ENCODE measurements at regions of chr12 and their contacts with region 1.

Region 1: DNA sequence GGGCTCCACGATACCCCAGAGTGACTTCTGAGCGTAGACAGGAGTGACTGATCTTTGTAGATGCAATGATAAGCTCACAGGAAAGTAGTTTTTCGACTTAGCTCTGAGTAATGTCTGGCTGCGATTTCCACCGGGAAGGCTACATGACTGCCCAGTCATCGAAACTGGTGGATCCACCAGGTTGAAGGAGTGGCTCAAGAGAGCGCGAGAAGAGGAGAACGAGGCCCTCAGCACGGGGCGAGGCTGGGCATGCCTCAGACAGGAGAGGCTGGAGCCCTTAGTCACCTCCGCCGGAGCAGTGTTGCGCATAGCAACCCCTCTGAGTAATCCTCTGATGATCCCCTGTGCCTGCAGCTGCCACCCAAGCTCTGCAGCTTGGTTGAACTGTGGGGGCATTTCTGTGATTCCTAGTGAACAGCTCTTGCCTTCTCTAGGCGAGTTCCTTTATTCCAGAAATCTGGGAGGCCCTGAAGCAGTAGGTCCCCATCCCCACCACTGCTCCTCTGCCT is 25.6 kb downstream of the ELK3 start:
- DNase-seq: peak; percentile 96 to 99
- H3K4me3 ChIP-seq: peak overlapping the region; percentile 56
- H3K27ac ChIP-seq: peak overlapping the region; percentile 100
- H3K4me1 ChIP-seq: peaks cover 53% of the 10 kb centered on the region
- H3K27me3 ChIP-seq: no peaks in the 10 kb centered on the region
- CTCF ChIP-seq: no peak

Region 2: DNA sequence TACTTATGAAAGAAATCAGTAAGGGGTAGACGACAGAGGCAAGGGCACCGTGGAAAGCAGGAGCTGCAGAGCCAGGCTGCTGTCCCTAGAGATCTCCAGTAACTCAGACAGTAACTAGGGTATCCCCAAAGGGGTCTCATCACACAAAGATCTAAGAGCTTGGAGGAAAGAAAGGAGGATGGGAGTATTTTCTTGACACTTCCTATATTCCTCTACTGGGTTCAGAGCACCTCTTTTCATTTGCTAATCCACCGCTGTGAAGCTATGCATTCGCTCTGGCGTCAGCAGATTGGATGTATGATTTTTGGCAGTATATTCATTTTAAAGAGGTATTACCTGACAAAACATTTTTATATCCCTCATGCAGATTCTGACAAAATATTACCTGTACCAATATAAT is 681.1 kb before region 1 on chr12:
- CTCF ChIA-PET with region 1: interaction called, 11 read pairs
- POLR2A ChIA-PET with region 1: no interaction called
- intact Hi-C with region 1: no loop called
- DNase-seq: no peak
- H3K4me3 ChIP-seq: no peak overlapping the region
- H3K27ac ChIP-seq: no peak overlapping the region
- H3K4me1 ChIP-seq: no peaks in the 10 kb centered on the region
- H3K27me3 ChIP-seq: no peaks in the 10 kb centered on the region
- CTCF ChIP-seq: no peak

Region 3: GRCh38 chr12:96061864-96062453 is 157.8 kb before region 1 on chr12:
- CTCF ChIA-PET with region 1: interaction called, 11 read pairs
- POLR2A ChIA-PET with region 1: interaction called, 7 read pairs
- intact Hi-C with region 1: loop called (anchors 1 kb)
- DNase-seq: peak; percentile 69 to 72
- H3K4me3 ChIP-seq: no peak overlapping the region
- H3K27ac ChIP-seq: 0 out of 2 replicates have a peak overlapping the region, but pooled peaks have one; percentile 14
- H3K4me1 ChIP-seq: peaks cover 9% of the 10 kb centered on the region; the same call in 1 of the 2 replicates
- H3K27me3 ChIP-seq: no peaks in the 10 kb centered on the region
- CTCF ChIP-seq: peak; percentile 89

Region 4: GRCh38 chr12:96132819-96133218 is 86.9 kb before region 1 on chr12:
- CTCF ChIA-PET with region 1: no interaction called
- POLR2A ChIA-PET with region 1: no interaction called
- intact Hi-C with region 1: loop called (anchors 2 kb)
- DNase-seq: peak in 1 of 2 experiments; percentile 32
- H3K4me3 ChIP-seq: no peak overlapping the region
- H3K27ac ChIP-seq: no peak overlapping the region
- H3K4me1 ChIP-seq: peaks cover 11% of the 10 kb centered on the region; the same call in 1 of the 2 replicates
- H3K27me3 ChIP-seq: no peaks in the 10 kb centered on the region
- CTCF ChIP-seq: peak; percentile 69

Region 5: DNA sequence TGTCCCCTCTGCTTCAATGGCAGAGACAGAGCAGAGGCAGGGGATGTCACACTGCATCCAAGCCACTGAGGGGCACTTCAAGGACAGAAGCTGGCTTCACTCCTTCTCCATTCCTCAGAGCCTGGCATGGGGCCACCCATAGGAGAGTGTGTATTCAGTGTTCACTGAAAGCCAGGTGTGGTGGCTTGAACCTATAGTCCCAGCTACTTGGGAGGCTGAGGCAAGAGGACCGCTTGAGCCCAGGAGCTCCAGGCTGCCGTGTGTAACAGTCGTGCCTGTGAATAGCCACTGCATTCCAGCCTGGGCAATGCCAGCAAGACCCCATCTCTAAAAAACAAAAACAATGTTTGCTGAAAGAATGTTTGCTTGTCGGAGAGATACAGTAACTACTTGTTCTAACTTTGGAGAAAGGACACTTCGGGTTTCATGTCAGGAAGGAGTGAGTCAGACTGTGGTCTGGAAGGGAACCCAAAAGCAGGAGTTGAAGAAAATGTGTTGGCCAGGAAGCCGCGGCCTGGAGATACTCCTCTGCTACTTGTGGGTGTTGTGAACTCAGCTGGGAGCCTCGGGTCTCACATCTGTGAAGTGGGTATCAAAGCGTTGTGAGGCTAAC is 17.8 kb after region 1 on chr12:
- CTCF ChIA-PET with region 1: interaction called, 12 read pairs
- POLR2A ChIA-PET with region 1: no interaction called
- intact Hi-C with region 1: no loop called
- DNase-seq: peak in 1 of 2 experiments; percentile 33
- H3K4me3 ChIP-seq: no peak overlapping the region
- H3K27ac ChIP-seq: no peak overlapping the region
- H3K4me1 ChIP-seq: no peaks in the 10 kb centered on the region
- H3K27me3 ChIP-seq: no peaks in the 10 kb centered on the region
- CTCF ChIP-seq: no peak

Region 6: DNA sequence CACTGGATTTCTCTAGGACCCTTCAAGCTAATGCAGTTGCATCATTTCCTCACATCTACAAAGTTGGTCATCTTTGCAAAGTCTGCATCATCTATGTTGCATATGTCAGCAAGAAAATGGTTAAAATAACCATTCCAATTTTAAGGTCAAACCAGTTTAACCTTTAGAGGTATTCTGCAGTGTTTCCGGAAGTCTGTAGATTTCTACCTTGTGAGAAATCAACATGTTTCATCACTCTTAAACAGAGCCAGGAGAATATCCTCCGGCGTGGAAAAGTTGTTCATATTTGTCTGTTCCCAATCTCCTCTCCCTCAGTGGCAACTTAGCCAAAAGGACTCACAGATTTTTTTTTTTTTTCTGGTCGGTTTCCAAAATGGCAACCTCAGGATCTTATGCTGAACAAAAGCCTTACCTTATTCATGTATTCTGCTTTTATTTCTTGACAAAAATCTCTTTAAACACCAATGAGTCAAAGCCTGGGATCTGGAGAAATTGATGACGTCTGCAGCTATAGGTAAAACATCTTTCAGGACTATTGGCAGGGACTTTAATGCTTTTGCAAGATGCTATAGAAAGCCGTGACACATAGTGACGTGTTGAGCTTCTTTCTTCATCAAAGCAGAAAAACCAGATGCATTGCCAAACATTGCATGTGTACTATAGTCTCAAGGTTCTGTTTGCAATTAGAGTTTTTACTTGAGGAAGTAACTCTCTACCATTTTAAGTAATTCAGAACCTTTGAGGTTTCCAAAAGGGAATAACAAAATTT is 196.5 kb after region 1 on chr12:
- CTCF ChIA-PET with region 1: no interaction called
- POLR2A ChIA-PET with region 1: interaction called, 17 read pairs
- intact Hi-C with region 1: no loop called
- DNase-seq: peak; percentile 14 to 92
- H3K4me3 ChIP-seq: peak overlapping the region; percentile 46; the same call in 1 of the 2 replicates
- H3K27ac ChIP-seq: peak overlapping the region; percentile 99
- H3K4me1 ChIP-seq: peaks cover 45% of the 10 kb centered on the region
- H3K27me3 ChIP-seq: no peaks in the 10 kb centered on the region
- CTCF ChIP-seq: no peak

Region 7: GRCh38 chr12:96658124-96658725 is 438.5 kb after region 1 on chr12:
- CTCF ChIA-PET with region 1: no interaction called
- POLR2A ChIA-PET with region 1: no interaction called
- intact Hi-C with region 1: no loop called
- DNase-seq: no peak
- H3K4me3 ChIP-seq: no peak overlapping the region
- H3K27ac ChIP-seq: no peak overlapping the region
- H3K4me1 ChIP-seq: no peaks in the 10 kb centered on the region
- H3K27me3 ChIP-seq: no peaks in the 10 kb centered on the region
- CTCF ChIP-seq: no peak

Measured in PC-9 (cell line).